Transverse colon (tissue), 4 donors: ENCODE measurements at regions of chr19 and their contacts with region 1.

Region 1: GRCh38 chr19:4844348-4845179 is 13.1 kb upstream of the TICAM1 start:
- DNase-seq: no peak
- H3K4me3 ChIP-seq: no peak overlapping the region
- H3K27ac ChIP-seq: peak overlapping the region; percentile 37 to 53 (median 45)
- H3K4me1 ChIP-seq: peaks cover 0 to 7% (median 6%) of the 10 kb centered on the region in 4 donors
- H3K27me3 ChIP-seq: no peaks in the 10 kb centered on the region
- CTCF ChIP-seq: no peak
- EP300 ChIP-seq: no peak
- POLR2A ChIP-seq: no peak

Region 2: GRCh38 chr19:4807188-4807587 is 37.4 kb before region 1 on chr19:
- in situ Hi-C with region 1: loop called in 1 of 4 experiments (anchors 5 kb)
- intact Hi-C with region 1: no loop called
- DNase-seq: peak; percentile 34
- H3K4me3 ChIP-seq: no peak overlapping the region
- H3K27ac ChIP-seq: peak overlapping the region in 2 of 4 donors; percentile 21 to 39
- H3K4me1 ChIP-seq: peaks cover 0 to 5% (median 2%) of the 10 kb centered on the region in 4 donors
- H3K27me3 ChIP-seq: no peaks in the 10 kb centered on the region
- CTCF ChIP-seq: no peak
- EP300 ChIP-seq: no peak
- POLR2A ChIP-seq: no peak